HEK293 (cell line): ENCODE measurements at regions of chr6 and their contacts with region 1.

Region 1: DNA sequence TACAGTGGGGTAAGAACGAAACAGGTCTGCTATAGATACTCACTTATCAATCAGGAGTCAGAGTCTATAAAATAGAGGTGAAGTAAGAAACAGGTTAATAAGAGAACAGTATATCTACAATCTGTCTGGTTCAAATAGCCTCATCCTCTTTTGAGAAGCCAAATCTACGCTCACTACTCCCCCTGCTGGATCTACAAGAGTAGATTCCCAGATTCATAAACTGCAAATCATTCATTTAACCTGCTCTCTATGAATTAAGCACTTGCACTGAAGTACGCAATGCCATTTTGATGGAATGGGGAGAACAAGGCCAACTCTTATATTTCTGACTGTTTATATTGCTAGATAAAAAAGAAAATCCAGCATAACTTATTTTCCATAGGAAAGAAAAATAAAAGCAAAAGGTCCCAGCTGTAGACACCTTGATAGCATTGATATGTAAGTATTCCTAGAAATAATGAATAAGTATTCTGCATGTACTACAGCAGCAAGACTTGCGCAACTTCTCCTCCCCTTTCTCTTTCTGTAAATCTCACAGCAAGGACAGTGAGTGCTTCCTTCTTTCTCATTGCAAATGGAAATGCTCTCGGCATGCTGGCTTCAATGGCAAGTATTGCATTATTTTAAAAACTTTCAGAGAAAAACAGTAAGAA is 92.3 kb downstream of the RFX6 start:
- H3K4me3 ChIP-seq: no peak overlapping the region
- H3K27ac ChIP-seq: no peak overlapping the region
- H3K4me1 ChIP-seq: no peaks in the 10 kb centered on the region
- CTCF ChIP-seq: peak; percentile 54; the same call in 1 of the 2 replicates

Region 2: DNA sequence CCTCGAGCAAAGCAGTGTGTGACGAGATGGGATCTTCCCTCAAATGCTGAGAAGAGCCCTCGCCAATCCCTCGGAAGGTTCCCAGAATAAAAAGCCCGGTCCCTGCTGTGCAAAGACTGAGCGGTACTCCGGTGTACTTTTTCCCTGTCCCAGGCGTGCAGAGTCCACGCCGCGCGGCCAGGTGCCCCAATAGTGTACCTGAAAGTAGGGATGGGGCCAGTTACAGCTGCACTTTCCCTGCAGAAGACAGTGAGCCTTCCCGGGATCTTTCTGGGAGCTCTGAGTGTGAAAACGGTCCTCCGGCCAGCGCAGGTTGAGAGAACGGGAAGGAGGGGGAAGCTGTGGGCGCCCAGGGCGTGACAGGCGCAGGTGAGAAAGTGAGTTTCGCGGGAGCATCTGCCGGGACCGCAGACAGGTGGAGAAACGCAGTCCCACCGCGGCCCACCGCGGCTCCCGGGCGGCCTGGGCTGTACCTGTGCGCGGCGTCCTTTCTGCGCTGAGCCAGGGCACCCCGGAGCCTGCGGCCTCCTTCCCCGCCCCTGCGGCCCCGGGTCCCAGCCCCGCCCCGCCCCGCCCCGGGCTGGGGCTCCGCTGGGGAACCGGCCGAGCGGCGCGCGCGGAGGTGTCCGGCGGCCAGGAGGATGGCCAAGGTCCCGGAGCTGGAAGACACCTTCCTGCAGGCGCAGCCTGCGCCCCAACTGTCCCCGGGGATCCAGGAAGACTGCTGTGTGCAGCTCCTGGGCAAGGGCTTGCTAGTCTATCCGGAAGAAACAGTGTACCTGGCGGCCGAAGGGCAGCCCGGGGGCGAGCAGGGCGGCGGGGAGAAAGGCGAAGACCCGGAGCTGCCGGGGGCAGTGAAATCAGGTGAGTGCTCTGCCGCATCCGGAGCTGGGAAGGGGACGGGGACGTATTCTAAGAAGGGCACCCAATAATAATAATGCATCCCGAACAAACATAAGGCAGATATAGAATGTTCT is 92.4 kb before region 1 on chr6 and contains the start of gene RFX6:
- CTCF ChIA-PET with region 1: interaction called, 106 read pairs
- POLR2A ChIA-PET with region 1: no interaction called
- H3K4me3 ChIP-seq: peak within 1 kb of the TSS; percentile 73
- H3K27ac ChIP-seq: no peak within 1 kb of the TSS; the same call in 1 of the 2 replicates
- H3K4me1 ChIP-seq: no peaks in the 10 kb centered on the region
- CTCF ChIP-seq: no peak

Region 3: DNA sequence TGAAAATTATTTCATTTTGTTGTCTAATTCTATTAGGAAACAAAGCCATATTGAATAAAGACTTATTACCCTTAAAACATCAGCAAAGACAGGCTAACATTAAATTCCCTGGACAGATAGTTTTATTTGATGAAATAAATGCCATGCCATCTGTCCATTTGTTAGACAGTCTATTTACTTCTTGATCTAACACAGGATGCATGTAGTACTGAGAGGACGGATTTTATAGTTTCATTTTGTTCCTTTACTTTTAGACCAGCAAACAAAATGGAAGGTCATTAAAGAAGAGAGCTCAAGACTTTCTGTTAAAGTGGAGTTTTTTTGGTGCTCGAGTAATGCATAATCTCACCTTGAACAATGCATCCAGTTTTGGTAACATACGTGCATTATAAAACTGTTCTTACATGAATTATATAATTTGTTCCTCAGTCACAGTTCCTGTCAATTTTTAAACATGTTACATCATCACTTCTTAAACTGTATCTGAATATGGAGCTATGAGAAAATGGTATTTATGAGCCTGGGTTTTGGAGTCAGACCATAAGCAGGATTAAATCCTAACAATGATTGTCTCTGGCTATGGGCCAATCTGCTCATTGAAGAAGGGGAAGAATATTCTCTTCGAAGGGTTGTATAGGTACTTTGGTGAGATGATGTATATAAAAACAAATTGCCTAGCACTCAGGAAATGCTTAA is 46.3 kb before region 1 on chr6:
- CTCF ChIA-PET with region 1: interaction called, 11 read pairs
- POLR2A ChIA-PET with region 1: no interaction called
- H3K4me3 ChIP-seq: no peak overlapping the region
- H3K27ac ChIP-seq: no peak overlapping the region
- H3K4me1 ChIP-seq: peaks cover 8% of the 10 kb centered on the region; the same call in 1 of the 2 replicates
- CTCF ChIP-seq: no peak

Region 4: GRCh38 chr6:116954938-116955337 is 14.4 kb before region 1 on chr6:
- CTCF ChIA-PET with region 1: interaction called, 17 read pairs
- POLR2A ChIA-PET with region 1: no interaction called
- H3K4me3 ChIP-seq: no peak overlapping the region
- H3K27ac ChIP-seq: no peak overlapping the region
- H3K4me1 ChIP-seq: peaks cover 10% of the 10 kb centered on the region
- CTCF ChIP-seq: no peak